ENCODE measurements at regions of chr5 and their contacts with region 1.

Region 1: DNA sequence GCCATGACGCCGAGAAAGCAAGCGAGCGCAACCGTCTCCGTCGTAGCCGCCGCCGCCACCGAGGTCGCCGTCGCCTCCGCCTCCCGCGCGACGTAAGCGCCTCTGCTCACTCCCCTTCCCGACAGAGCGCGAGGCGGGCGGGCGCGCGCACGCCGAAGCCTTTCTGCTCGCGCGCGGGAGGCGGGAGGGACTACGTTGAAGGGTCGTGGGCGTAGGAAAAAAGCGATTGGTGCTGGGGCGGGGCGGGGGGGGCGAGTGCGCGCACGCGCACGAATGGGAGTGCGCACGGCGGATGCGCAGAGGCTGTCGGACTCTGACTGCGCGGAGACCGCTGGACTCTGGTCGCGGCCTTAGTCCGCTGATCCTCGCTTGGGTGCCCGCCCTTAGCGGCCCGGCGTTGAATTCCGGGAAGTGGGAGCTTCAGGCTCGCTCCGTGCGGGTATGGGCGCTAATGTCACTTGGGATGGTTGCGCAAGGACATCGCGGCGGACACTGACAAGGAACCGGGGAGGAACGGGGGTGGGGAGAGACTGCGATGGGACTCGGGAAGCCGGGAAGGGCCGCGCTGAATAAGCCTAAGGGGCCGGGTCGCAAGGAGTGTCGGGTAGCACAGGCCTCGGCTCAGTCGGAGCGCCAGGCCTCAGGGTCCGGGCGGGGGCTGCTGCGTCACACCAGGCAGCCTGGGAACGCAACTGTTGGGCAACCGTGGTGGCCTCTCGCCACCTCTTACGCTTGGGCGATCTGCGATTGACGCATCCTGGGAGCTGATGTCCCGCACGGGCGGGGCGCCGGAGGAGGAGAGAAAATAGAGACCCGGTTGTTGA is at the start of gene CHD1:
- DNase-seq: peak; percentile 93
- H3K4me3 Mint-ChIP-seq: peak within 1 kb of the TSS; percentile 98
- H3K27ac Mint-ChIP-seq: peak within 1 kb of the TSS; percentile 99
- H3K4me1 Mint-ChIP-seq: peaks cover 71% of the 10 kb centered on the region
- H3K27me3 Mint-ChIP-seq: no peaks in the 10 kb centered on the region
- total RNA-seq, gene CHD1: 83.0 and 83.3 TPM in 2 replicates

Region 2: DNA sequence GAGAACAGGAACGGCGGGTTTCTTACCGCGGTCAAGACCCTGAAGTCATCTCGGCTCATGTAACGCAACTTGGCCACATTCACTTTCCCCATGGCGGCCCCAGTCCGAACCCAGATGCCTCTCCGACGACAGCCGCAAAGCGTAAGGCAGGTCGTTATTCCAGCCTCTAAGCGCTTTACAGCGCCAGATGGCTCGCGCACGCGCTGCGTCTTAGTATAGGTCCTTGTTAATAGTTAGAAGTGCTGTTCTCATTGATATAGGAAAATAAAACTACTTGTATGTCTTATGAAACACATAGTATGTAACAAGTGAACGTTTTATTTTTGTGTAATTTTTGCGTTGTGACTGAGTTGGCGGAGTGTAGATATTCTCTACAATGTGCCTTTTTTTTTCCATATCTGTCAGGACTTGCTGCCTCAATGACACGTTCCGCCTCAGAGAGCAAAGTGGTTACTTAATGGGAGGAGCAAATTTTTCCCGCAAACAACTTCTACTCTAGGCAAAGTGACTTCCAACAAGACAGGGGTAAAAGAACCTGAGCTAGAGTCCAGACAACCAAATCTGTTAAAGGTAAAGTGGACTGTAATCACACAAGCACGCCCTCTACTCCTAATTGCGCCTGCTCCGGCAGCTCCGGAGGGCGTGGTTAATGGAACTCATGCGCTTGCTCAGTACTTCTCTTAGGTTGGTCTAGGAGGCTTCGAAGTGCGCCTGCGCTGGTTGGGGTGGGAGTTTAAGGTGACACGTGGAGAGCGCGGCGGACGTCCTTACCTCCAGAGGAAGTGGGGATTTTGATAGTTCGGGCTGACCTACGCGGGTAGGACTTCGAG is 1745.8 kb before region 1 on chr5 and contains the start of gene RIOK2:
- intact Hi-C with region 1: loop called (anchors 1 kb)
- DNase-seq: peak; percentile 86
- H3K4me3 Mint-ChIP-seq: peak within 1 kb of the TSS; percentile 91
- H3K27ac Mint-ChIP-seq: peak within 1 kb of the TSS; percentile 100
- H3K4me1 Mint-ChIP-seq: peaks cover 42% of the 10 kb centered on the region
- H3K27me3 Mint-ChIP-seq: peaks cover 9% of the 10 kb centered on the region
- total RNA-seq, gene RIOK2: 37.2 and 47.2 TPM in 2 replicates

Region 3: GRCh38 chr5:98872674-98873073 is 56.4 kb before region 1 on chr5:
- intact Hi-C with region 1: no loop called
- DNase-seq: no peak
- H3K4me3 Mint-ChIP-seq: no peak overlapping the region
- H3K27ac Mint-ChIP-seq: no peak overlapping the region
- H3K4me1 Mint-ChIP-seq: peaks cover 6% of the 10 kb centered on the region
- H3K27me3 Mint-ChIP-seq: no peaks in the 10 kb centered on the region

Region 4: GRCh38 chr5:98891591-98891990 is 37.5 kb before region 1 on chr5:
- intact Hi-C with region 1: loop called (anchors 5 kb)
- DNase-seq: no peak
- H3K4me3 Mint-ChIP-seq: no peak overlapping the region
- H3K27ac Mint-ChIP-seq: no peak overlapping the region
- H3K4me1 Mint-ChIP-seq: no peaks in the 10 kb centered on the region
- H3K27me3 Mint-ChIP-seq: no peaks in the 10 kb centered on the region

Region 5: GRCh38 chr5:98917433-98917832 is 11.7 kb before region 1 on chr5:
- intact Hi-C with region 1: loop called (anchors 1 kb)
- DNase-seq: no peak
- H3K4me3 Mint-ChIP-seq: no peak overlapping the region
- H3K27ac Mint-ChIP-seq: no peak overlapping the region
- H3K4me1 Mint-ChIP-seq: peaks cover 70% of the 10 kb centered on the region
- H3K27me3 Mint-ChIP-seq: no peaks in the 10 kb centered on the region

Region 6: GRCh38 chr5:99032234-99033013 is 103.3 kb after region 1 on chr5:
- intact Hi-C with region 1: loop called (anchors 1 kb)
- DNase-seq: no peak
- H3K4me3 Mint-ChIP-seq: peak overlapping the region; percentile 79
- H3K27ac Mint-ChIP-seq: peak overlapping the region; percentile 86
- H3K4me1 Mint-ChIP-seq: peaks cover 78% of the 10 kb centered on the region
- H3K27me3 Mint-ChIP-seq: peaks cover 2% of the 10 kb centered on the region

Measured in activated T-helper 1 cell treated with anti-CD3 and anti-CD28 coated beads, Interleukin-12 subunit alpha, Interleukin-12 subunit beta, Interleukin-2, Interleukin-4 antibody, amounts not matched to agents 30 ng/mL and 10 ng/mL and 1 ng/mL, durations not matched to agents 14 hours and 24 hours and 36 hours (primary cell).